ENCODE measurements at regions of chr1 and their contacts with region 1.

Region 1: GRCh38 chr1:246002725-246003441 is 504.2 kb downstream of the SMYD3 start:
- DNase-seq: peak; percentile 55 to 83 (median 71)
- ATAC-seq: peak; percentile 78
- H3K4me3 ChIP-seq: no peak overlapping the region
- H3K4me3 Mint-ChIP-seq: no peak overlapping the region
- H3K27ac ChIP-seq: no peak overlapping the region
- H3K27ac Mint-ChIP-seq: no peak overlapping the region
- H3K4me1 ChIP-seq: no peaks in the 10 kb centered on the region
- H3K4me1 Mint-ChIP-seq: peaks cover 0 to 4% (median 0%) of the 10 kb centered on the region in 7 donors
- H3K27me3 ChIP-seq: no peaks in the 10 kb centered on the region
- H3K27me3 Mint-ChIP-seq: no peaks in the 10 kb centered on the region

Region 2: DNA sequence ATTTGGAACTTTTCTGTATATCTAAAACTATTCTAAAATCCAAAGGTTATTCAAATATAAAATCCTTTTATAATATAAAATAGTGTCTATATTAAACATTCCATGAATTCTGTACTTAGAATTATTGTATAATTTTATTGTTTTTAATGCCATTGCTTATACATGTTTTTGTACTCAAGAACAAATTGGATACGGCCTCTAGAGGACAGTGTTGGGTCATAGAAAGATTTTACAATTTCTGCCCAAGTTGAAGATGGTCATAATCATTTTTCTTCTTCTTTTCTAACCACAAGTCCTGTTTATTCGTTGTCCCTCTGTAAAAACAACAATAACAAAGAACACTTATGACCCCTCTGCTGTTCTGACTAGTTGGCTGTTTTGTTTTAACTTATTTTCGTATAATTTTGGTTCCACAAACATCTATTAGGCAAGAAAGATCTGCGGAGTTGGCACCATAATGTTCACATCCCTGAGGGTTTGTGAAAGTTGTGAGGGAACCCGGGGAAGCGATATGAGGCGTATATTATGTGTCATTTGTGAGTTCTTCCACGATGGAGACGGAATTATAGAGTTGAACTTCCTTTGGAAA is 923.8 kb before region 1 on chr1:
- CTCF ChIA-PET with region 1: no interaction called
- POLR2A ChIA-PET with region 1: no interaction called
- intact Hi-C with region 1: loop called in 1 of 2 experiments (anchors 1 kb)
- DNase-seq: no peak
- ATAC-seq: no peak
- H3K4me3 ChIP-seq: no peak overlapping the region
- H3K4me3 Mint-ChIP-seq: no peak overlapping the region
- H3K27ac ChIP-seq: no peak overlapping the region
- H3K27ac Mint-ChIP-seq: no peak overlapping the region
- H3K4me1 ChIP-seq: no peaks in the 10 kb centered on the region
- H3K4me1 Mint-ChIP-seq: no peaks in the 10 kb centered on the region
- H3K27me3 ChIP-seq: no peaks in the 10 kb centered on the region
- H3K27me3 Mint-ChIP-seq: peaks cover 0 to 3% (median 0%) of the 10 kb centered on the region in 5 donors

Region 3: GRCh38 chr1:245516284-245516759 is 486.6 kb before region 1 on chr1:
- CTCF ChIA-PET with region 1: no interaction called
- POLR2A ChIA-PET with region 1: no interaction called
- intact Hi-C with region 1: loop called in 1 of 2 experiments (anchors 2 kb)
- DNase-seq: no peak
- ATAC-seq: peak; percentile 14
- H3K4me3 ChIP-seq: no peak overlapping the region
- H3K4me3 Mint-ChIP-seq: no peak overlapping the region
- H3K27ac ChIP-seq: no peak overlapping the region
- H3K27ac Mint-ChIP-seq: no peak overlapping the region
- H3K4me1 ChIP-seq: no peaks in the 10 kb centered on the region
- H3K4me1 Mint-ChIP-seq: peaks cover 0 to 4% (median 0%) of the 10 kb centered on the region in 7 donors
- H3K27me3 ChIP-seq: no peaks in the 10 kb centered on the region
- H3K27me3 Mint-ChIP-seq: peaks cover 7 to 43% (median 18%) of the 10 kb centered on the region in 5 donors

Region 4: DNA sequence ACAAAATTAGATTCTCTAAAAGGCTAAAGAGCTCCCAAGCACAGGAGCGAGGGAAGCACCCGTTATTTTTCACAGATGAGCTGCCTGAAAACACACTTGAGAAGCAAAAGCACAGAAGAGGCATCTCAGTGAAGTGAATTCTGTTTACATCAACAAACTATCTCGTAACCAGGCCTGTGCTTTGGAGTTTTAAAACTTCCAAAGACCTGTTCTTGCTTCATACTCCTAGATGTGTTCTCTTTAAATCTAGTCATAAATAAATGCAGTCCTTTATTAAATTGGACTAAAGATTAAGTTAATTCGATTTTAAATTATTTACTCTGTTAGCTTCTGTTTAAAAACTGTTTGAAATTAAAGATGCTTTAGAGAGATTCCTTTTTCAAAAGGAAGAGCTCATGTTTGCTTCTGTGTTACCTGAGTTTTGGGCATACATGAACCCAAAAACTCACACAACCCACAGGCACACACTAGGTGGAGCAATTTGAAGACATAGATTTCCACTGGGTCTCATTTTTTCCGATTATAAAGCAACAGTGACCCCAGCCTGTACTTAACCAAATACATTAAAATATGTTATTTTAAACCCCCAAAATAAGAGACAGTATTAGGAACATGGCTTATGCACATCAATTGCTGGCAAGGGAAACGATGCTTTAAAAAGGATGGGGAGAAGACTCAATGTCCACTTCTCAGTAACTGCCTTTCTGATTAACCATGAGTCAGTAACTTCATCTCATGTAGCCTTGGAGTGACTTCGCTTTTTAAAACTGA is 144.0 kb before region 1 on chr1:
- CTCF ChIA-PET with region 1: interaction called, 3 read pairs
- POLR2A ChIA-PET with region 1: no interaction called
- intact Hi-C with region 1: loop called in 1 of 2 experiments (anchors 1 kb)
- DNase-seq: no peak
- ATAC-seq: no peak
- H3K4me3 ChIP-seq: no peak overlapping the region
- H3K4me3 Mint-ChIP-seq: no peak overlapping the region
- H3K27ac ChIP-seq: no peak overlapping the region
- H3K27ac Mint-ChIP-seq: no peak overlapping the region
- H3K4me1 ChIP-seq: no peaks in the 10 kb centered on the region
- H3K4me1 Mint-ChIP-seq: peaks cover 0 to 5% (median 0%) of the 10 kb centered on the region in 7 donors
- H3K27me3 ChIP-seq: no peaks in the 10 kb centered on the region
- H3K27me3 Mint-ChIP-seq: no peaks in the 10 kb centered on the region

Region 5: GRCh38 chr1:245888809-245889208 is 114.1 kb before region 1 on chr1:
- CTCF ChIA-PET with region 1: interaction called, 3 read pairs
- POLR2A ChIA-PET with region 1: no interaction called
- intact Hi-C with region 1: loop called (anchors 1 kb)
- DNase-seq: peak in 4 of 9 donors; percentile 13 to 25 (median 18)
- ATAC-seq: peak; percentile 37
- H3K4me3 ChIP-seq: no peak overlapping the region
- H3K4me3 Mint-ChIP-seq: no peak overlapping the region
- H3K27ac ChIP-seq: no peak overlapping the region
- H3K27ac Mint-ChIP-seq: no peak overlapping the region
- H3K4me1 ChIP-seq: no peaks in the 10 kb centered on the region
- H3K4me1 Mint-ChIP-seq: peaks cover 0 to 15% (median 3%) of the 10 kb centered on the region in 7 donors
- H3K27me3 ChIP-seq: no peaks in the 10 kb centered on the region
- H3K27me3 Mint-ChIP-seq: no peaks in the 10 kb centered on the region

Region 6: GRCh38 chr1:245953876-245954660 is 48.8 kb before region 1 on chr1:
- CTCF ChIA-PET with region 1: no interaction called
- POLR2A ChIA-PET with region 1: no interaction called
- intact Hi-C with region 1: loop called in 1 of 2 experiments (anchors 5 kb)
- DNase-seq: peak in 6 of 9 donors; percentile 17 to 49 (median 34)
- ATAC-seq: peak; percentile 45
- H3K4me3 ChIP-seq: peak overlapping the region; percentile 31
- H3K4me3 Mint-ChIP-seq: peak overlapping the region in 8 of 10 donors; percentile 56 to 90 (median 78)
- H3K27ac ChIP-seq: peak overlapping the region; percentile 76
- H3K27ac Mint-ChIP-seq: peak overlapping the region in 1 of 9 donors; percentile 97
- H3K4me1 ChIP-seq: peaks cover 25 to 27% of the 10 kb centered on the region in 2 donors
- H3K4me1 Mint-ChIP-seq: peaks cover 9 to 29% (median 19%) of the 10 kb centered on the region in 7 donors
- H3K27me3 ChIP-seq: no peaks in the 10 kb centered on the region
- H3K27me3 Mint-ChIP-seq: no peaks in the 10 kb centered on the region